Activated CD4-positive, alpha-beta memory T cell treated with anti-CD3 and anti-CD28 coated beads for 36 hours (primary cell): ENCODE measurements at regions of chr1 and their contacts with region 1.

Region 1: DNA sequence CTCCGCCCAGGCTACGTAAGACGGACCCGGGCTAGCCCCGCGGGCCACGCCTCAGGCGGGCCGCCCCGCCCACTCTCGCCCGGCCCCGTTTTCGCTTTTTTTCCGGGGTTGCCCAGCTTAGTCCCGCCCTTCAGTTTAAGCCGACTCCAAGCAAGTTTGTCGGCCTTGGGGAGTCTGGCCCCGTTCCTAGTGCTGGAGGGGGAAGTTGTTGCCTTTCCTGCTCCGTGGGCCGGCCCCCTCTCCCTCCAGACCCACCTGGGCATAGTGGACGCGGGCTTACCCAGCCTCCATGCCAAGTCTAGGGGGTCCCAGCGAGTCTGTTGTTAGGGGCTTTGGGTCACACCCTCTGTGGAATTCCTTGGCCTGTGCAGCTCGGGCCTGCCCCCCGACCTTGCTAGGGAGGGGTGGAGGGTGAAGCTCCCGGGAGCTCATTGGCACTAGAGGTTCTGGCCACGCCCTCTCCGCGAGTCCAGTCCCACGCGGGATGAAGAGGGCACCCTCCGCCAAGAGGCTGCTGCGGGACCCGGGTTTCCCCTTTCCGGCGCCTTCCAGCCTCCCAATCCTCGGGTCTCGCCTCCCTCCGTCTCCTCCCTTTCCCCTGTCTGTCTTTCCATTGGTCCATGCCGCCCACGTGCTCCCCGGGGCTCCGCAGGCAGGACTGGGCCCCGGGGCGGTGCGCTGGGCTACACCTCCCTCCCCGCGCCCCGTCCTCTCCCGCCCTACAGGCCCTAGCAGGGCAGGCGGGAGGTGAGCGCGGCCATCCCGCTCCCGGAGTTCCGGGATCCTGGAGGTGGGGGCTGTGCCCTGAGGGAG is 3.3 kb downstream of the RUSC1 start:
- DNase-seq: peak; percentile 97
- H3K4me3 Mint-ChIP-seq: peak overlapping the region; percentile 83
- H3K27ac Mint-ChIP-seq: peak overlapping the region; percentile 69
- H3K4me1 Mint-ChIP-seq: peaks cover 30% of the 10 kb centered on the region
- H3K27me3 Mint-ChIP-seq: no peaks in the 10 kb centered on the region

Region 2: DNA sequence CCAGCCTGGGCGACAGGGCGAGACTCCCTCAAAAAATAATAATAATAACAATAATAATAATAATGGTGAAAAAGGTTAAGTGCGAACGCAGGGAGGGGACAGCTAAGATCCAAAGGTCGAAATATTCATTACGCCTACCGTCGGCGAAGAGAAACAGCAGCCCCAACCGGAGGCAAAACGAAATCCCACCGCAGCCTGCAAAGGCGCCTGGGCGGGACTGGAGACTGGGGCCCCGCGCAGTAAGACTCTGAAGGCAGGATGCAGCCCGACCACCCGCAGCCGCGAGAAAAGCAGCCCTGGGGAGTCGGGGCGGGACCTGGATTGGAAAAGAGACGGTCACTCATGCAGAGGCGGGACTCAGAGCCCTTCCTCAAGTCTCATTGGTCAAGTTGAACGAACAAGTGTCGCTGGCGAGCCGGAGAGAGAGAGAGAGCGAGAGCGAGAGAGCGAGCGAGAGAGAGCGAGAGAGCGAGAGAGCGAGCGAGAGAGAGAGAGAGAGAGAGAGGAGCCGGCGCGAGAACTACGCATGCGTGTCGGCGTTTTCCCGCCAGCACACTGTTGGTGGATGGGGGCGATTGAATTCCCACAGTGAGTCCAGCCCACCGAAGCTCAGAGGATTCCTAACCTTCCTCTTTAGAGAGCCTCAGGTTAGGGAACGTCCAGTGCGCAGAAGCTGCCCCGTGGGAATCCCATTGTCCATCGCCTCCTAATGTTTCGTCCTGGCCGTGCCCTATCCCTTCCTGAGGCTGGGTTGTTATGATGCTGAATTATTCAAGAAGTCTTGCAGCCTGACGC is 79.4 kb before region 1 on chr1:
- CTCF ChIA-PET with region 1: interaction called, 188 read pairs
- POLR2A ChIA-PET with region 1: interaction called, 6 read pairs
- intact Hi-C with region 1: loop called (anchors 1 kb)
- DNase-seq: peak; percentile 98
- H3K4me3 Mint-ChIP-seq: peak overlapping the region; percentile 76
- H3K27ac Mint-ChIP-seq: peak overlapping the region; percentile 90
- H3K4me1 Mint-ChIP-seq: peaks cover 45% of the 10 kb centered on the region
- H3K27me3 Mint-ChIP-seq: peaks cover 2% of the 10 kb centered on the region

Region 3: DNA sequence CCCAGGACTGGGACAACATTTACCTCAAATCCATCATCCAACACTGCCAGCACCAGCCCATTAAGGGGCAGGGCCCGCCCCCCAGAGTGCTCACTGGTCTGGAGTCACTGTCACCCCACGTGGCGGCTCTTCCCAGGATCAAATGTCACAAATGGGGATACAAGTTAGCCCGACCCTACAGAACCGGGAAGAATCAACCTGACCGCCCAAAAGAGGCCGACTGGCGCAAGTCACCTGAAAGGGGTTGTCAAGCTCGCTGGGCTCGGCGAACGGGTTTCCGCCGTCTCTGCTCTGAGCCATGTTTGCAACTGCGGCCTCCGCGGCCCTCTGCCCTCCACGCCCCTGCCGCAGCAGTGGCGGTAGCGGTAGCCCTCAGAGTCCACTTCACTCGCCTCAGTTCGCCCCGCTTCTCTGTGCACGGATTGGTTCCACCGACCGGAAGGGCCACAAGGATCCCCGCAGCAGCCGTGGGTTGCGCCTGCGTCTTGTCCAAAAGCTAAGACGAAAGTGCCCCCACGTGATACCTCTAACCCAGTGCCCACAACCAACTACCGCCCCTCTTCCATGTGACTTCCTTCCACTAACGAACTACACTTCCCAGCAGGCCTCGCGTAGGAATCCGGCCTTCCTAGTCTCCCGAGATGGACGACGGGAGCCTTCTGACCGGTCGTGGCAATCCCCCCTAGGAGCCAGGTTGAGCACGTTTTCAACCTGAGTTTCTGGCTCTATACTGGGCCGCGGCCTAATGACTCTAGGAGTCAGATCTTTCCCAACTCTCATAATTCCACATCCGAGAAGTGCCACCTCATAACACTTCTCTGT is 61.9 kb before region 1 on chr1 and contains the start of gene SCAMP3:
- CTCF ChIA-PET with region 1: interaction called, 13 read pairs
- POLR2A ChIA-PET with region 1: interaction called, 5 read pairs
- intact Hi-C with region 1: no loop called
- DNase-seq: peak; percentile 94
- H3K4me3 Mint-ChIP-seq: peak within 1 kb of the TSS; percentile 98
- H3K27ac Mint-ChIP-seq: peak within 1 kb of the TSS; percentile 88
- H3K4me1 Mint-ChIP-seq: peaks cover 24% of the 10 kb centered on the region
- H3K27me3 Mint-ChIP-seq: no peaks in the 10 kb centered on the region
- total RNA-seq, gene SCAMP3: 89.6 to 91.7 TPM

Region 4: DNA sequence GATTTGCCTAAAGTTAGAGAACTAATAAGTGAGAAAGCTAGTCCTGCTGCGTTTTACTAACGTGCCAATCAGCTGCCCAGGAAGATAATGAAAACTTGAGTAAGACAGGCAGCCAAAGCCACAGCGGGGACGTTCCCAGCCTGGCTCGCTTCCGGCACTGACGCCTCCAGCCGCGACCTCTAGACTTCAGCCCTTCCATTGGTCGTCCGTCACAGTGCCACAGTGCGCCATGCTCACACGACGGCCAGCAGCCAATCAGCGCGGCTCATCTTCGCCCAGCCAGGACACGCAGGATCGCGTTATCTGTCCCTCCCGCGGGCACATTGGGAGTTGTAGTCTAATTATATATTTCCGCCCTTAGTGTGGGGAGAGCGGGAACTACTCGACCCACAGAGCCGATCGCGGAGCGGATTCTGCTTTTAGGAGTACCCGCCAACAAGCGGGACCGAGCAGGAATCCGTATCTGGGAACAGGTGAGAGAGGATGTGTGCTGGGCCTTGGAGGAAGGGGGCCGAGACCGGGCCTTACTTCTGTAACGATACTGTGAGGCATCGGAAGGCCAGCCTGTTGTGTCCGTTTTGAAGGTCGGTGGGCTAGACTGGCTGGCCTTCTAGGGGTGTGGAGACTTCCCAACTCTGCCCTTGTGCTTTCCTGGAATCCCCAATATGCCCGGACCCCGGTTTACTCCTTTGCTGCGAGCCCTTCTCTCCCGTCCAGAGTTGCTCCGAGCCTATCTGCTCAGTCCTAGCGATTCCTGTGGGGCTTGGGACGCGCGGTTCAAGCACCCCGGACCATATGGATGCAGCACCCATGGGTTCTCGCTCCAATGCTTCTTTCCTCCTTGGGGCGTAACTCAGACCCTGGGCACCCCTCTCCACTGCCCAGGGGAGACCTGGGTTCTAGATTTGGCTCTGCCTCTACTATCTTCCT is 15.2 kb before region 1 on chr1 and contains the start of gene FDPS:
- CTCF ChIA-PET with region 1: interaction called, 6 read pairs
- POLR2A ChIA-PET with region 1: interaction called, 5 read pairs
- intact Hi-C with region 1: loop called (anchors 1 kb)
- DNase-seq: peak; percentile 99
- H3K4me3 Mint-ChIP-seq: peak within 1 kb of the TSS; percentile 97
- H3K27ac Mint-ChIP-seq: peak within 1 kb of the TSS; percentile 99
- H3K4me1 Mint-ChIP-seq: peaks cover 29% of the 10 kb centered on the region
- H3K27me3 Mint-ChIP-seq: no peaks in the 10 kb centered on the region
- total RNA-seq, gene FDPS: 378 to 395 TPM

Region 5: GRCh38 chr1:155342842-155343241 is 18.8 kb after region 1 on chr1:
- CTCF ChIA-PET with region 1: no interaction called
- POLR2A ChIA-PET with region 1: no interaction called
- intact Hi-C with region 1: no loop called
- DNase-seq: no peak
- H3K4me3 Mint-ChIP-seq: no peak overlapping the region
- H3K27ac Mint-ChIP-seq: no peak overlapping the region
- H3K4me1 Mint-ChIP-seq: no peaks in the 10 kb centered on the region
- H3K27me3 Mint-ChIP-seq: no peaks in the 10 kb centered on the region

Region 6: GRCh38 chr1:155744711-155745283 is 420.8 kb after region 1 on chr1:
- CTCF ChIA-PET with region 1: no interaction called
- POLR2A ChIA-PET with region 1: no interaction called
- intact Hi-C with region 1: loop called (anchors 1 kb)
- DNase-seq: no peak
- H3K4me3 Mint-ChIP-seq: peak overlapping the region; percentile 90
- H3K27ac Mint-ChIP-seq: peak overlapping the region; percentile 83
- H3K4me1 Mint-ChIP-seq: peaks cover 3% of the 10 kb centered on the region
- H3K27me3 Mint-ChIP-seq: no peaks in the 10 kb centered on the region